Activated naive CD4-positive, alpha-beta T cell treated with anti-CD3 and anti-CD28 coated beads, Interleukin-2, amount 10 ng/mL, durations not matched to agents 7 days and 5 days (primary cell): ENCODE measurements at regions of chr22 and their contacts with region 1.

Region 1: DNA sequence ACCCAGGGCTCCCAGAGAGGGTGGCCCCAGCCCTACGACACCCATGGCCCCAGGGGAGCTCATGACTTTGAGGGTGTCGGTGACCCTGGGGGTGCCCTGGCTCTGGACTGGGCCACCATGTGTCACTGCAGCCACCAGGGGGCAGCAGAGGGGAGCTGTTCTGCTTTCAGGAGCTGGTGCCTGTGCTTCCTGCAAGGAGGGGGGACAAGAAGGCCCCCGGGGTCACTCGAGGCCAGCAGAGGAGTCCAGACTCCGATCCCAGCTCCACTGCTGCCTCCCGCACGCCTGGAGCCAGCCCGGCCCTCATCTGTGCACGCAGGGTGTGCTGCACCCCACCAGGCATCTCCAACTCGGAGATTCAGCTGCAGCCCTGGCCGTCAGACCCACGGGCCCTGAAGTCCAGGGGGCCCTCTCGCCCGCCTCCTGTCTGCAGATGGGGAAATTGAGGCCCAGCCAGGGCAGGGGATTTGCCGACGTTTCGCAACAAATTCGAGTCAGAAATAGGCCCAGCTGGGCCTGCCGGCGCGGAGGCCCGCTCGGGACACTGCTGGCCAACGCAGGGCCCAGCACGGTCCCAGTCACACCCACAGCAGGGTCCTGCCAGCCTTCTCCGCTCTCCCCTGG is 29.5 kb upstream of the WNT7B start:
- DNase-seq: peak; percentile 91
- H3K4me3 Mint-ChIP-seq: no peak overlapping the region
- H3K27ac Mint-ChIP-seq: no peak overlapping the region
- H3K4me1 Mint-ChIP-seq: peaks cover 9% of the 10 kb centered on the region
- H3K27me3 Mint-ChIP-seq: peaks cover 9% of the 10 kb centered on the region

Region 2: DNA sequence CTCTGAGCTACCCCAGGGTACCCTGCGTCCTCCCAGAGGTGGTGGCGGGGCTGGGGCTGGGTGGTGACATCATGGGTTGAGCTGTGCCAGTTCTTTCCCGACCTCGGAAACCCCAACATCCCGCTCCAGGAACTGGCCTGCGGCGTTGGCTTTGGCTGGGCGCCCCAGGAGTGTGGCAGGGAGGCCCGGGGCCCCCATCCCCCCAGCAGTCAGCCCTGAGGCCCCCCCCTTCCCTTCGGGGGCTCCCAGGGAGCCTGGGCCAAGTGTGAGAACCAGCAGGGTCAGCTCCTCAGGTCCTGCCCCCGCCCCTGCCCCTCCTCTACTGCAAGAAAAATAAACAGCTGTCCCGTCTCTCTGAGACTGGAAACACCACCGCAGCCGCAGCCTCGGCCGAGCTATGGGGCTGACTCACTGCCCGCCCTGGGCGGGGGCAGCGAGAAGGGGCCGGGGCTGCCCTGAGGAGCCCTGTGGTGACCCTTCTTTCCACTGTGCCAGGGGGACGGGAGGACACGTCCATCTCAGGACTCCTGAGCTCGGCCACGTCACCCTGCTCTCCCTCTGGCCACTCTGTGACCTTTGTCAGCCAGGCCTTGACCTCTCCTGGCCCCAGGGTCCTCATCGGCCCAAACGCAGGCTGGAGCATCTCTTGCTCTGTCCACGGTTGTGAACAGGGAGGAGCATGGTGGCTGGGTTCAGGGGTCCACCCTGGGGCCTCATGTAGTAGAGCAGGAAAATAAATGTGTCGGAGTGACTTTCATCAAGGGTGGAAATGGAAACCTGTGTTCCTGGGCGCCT is 102.9 kb before region 1 on chr22:
- CTCF ChIA-PET with region 1: no interaction called
- DNase-seq: no peak
- H3K4me3 Mint-ChIP-seq: no peak overlapping the region
- H3K27ac Mint-ChIP-seq: no peak overlapping the region
- H3K4me1 Mint-ChIP-seq: no peaks in the 10 kb centered on the region
- H3K27me3 Mint-ChIP-seq: peaks cover 26% of the 10 kb centered on the region

Region 3: DNA sequence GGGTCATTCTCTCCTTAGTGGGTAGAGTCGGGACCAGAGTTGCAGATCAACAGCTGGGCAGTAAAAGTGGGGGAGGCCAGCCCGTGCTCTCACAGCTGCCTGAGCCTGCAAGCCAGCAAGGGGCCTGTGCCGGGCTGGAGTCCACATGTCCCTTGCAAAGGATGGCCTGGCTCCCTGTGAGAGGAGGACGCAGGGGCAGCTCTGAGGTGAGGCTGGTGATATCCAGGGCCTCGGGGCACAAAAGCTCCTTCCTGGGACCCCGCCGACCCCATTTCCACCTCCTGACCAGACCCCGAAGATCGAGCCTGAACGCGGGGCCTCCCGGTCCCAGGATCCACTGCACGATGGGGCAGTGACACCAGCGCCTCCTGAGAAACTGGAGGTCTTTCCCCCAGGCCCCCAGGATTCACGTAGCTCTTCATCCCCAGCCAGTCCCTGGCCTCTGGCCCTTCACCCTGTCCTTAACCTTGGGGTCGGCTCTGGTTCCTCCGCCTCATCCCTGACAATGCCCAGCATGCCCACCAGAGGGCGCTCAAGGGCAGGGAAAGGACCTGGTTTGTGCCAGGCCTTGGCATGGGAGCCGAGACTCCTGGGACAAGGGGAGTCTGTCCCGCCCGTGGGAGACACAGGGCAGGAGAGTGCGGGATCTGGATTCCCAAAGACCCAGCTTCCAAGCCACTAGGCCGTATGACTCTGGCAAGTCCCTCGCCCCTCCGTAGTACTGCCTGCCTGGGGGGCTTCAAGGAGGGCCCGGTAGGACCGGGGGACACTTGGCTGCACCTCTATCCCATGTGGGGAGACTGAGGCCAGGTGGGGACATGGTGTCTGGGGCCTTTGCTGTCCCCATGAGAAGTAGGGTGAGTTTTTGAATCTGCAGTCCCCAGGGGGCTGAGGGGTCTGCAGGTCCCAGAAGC is 11.7 kb before region 1 on chr22:
- CTCF ChIA-PET with region 1: interaction called, 56 read pairs
- DNase-seq: peak; percentile 85
- H3K4me3 Mint-ChIP-seq: no peak overlapping the region
- H3K27ac Mint-ChIP-seq: no peak overlapping the region
- H3K4me1 Mint-ChIP-seq: peaks cover 6% of the 10 kb centered on the region
- H3K27me3 Mint-ChIP-seq: peaks cover 28% of the 10 kb centered on the region

Region 4: GRCh38 chr22:46019351-46019750 is 12.9 kb after region 1 on chr22:
- CTCF ChIA-PET with region 1: interaction called, 11 read pairs
- DNase-seq: no peak
- H3K4me3 Mint-ChIP-seq: no peak overlapping the region
- H3K27ac Mint-ChIP-seq: no peak overlapping the region
- H3K4me1 Mint-ChIP-seq: peaks cover 4% of the 10 kb centered on the region
- H3K27me3 Mint-ChIP-seq: peaks cover 47% of the 10 kb centered on the region

Region 5: GRCh38 chr22:46035742-46036557 is 29.5 kb after region 1 on chr22:
- CTCF ChIA-PET with region 1: interaction called, 50 read pairs
- DNase-seq: peak; percentile 100
- H3K4me3 Mint-ChIP-seq: peak overlapping the region; percentile 80
- H3K27ac Mint-ChIP-seq: peak overlapping the region; percentile 95
- H3K4me1 Mint-ChIP-seq: peaks cover 24% of the 10 kb centered on the region
- H3K27me3 Mint-ChIP-seq: peaks cover 11% of the 10 kb centered on the region

Region 6: DNA sequence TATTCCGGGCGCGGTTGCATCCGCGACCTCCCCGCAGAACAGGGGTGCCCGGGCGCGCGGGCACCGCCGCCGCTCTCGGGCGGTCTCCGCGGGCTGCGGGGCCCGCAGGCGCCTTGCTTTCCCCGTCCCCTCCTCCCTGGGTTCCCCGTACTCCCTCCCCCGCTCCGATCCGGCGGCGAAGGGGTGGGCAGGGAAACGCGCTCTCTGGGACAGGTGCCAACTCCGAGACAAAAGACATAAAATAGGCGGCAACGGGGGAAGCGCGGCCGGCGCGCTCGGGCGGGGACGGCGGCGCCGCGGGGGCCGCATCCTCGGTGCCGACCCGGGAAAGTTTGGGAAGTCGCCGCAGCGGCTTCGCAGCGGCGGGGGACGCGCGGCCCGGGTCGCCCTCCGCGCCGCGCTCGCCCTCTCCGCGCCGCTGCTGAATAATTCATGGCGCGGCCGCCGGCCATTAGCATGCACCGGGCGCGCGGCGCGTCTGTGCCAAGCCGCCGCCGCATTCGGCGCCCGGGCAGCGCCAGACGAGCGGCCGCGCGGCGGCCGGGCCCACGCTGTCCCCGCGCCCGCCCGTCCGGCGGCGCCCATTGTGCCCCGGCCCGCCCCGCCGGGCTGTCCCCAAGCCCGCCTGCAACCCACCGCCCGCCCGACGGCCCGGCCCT is 65.1 kb after region 1 on chr22:
- CTCF ChIA-PET with region 1: interaction called, 25 read pairs
- DNase-seq: peak; percentile 69
- H3K4me3 Mint-ChIP-seq: peak overlapping the region; percentile 86
- H3K27ac Mint-ChIP-seq: peak overlapping the region; percentile 94
- H3K4me1 Mint-ChIP-seq: peaks cover 59% of the 10 kb centered on the region
- H3K27me3 Mint-ChIP-seq: peaks cover 17% of the 10 kb centered on the region